CD8-positive, alpha-beta T cell (primary cell): ENCODE measurements at regions of chr7 and their contacts with region 1.

Region 1: DNA sequence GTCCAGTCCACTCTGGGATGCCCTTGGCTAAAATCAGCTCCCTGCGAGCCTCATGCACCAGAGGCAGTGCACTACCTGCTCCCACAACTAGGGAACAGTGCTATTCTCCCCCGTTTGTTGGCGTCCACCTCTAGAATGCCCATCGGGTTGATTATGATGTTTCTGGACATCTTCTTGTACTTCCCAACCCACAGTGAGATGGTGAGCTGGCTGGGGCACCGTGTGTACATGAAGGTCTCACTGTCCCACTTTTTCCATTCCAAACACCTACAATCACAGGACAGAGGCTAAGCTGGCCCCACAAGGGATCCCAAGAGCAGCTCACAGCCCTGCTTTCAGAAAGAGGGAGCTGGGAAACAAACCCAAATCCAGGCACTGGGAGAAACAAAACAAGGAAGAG is 126.2 kb upstream of the ZNF92 start:
- DNase-seq: no peak
- ATAC-seq: no peak
- H3K4me3 ChIP-seq: no peak overlapping the region
- H3K4me3 Mint-ChIP-seq: no peak overlapping the region
- H3K27ac ChIP-seq: no peak overlapping the region
- H3K27ac Mint-ChIP-seq: no peak overlapping the region
- H3K4me1 ChIP-seq: peaks cover 2% of the 10 kb centered on the region
- H3K4me1 Mint-ChIP-seq: peaks cover 8% of the 10 kb centered on the region
- H3K27me3 ChIP-seq: peaks cover 0 to 4% of the 10 kb centered on the region in 2 experiments
- H3K27me3 Mint-ChIP-seq: peaks cover 26% of the 10 kb centered on the region
- CTCF ChIP-seq: no peak

Region 2: GRCh38 chr7:64849250-64849923 is 398.1 kb before region 1 on chr7:
- CTCF ChIA-PET with region 1: no interaction called
- POLR2A ChIA-PET with region 1: no interaction called
- intact Hi-C with region 1: no loop called
- DNase-seq: no peak
- ATAC-seq: no peak
- H3K4me3 ChIP-seq: no peak overlapping the region
- H3K4me3 Mint-ChIP-seq: no peak overlapping the region
- H3K27ac ChIP-seq: no peak overlapping the region
- H3K27ac Mint-ChIP-seq: no peak overlapping the region
- H3K4me1 ChIP-seq: no peaks in the 10 kb centered on the region
- H3K4me1 Mint-ChIP-seq: no peaks in the 10 kb centered on the region
- H3K27me3 ChIP-seq: no peaks in the 10 kb centered on the region
- H3K27me3 Mint-ChIP-seq: no peaks in the 10 kb centered on the region
- CTCF ChIP-seq: no peak

Region 3: GRCh38 chr7:65269150-65269856 is 21.8 kb after region 1 on chr7:
- CTCF ChIA-PET with region 1: no interaction called
- POLR2A ChIA-PET with region 1: no interaction called
- intact Hi-C with region 1: no loop called
- DNase-seq: peak in 2 of 9 experiments; percentile 13 to 15
- ATAC-seq: no peak
- H3K4me3 ChIP-seq: peak overlapping the region; percentile 22 to 26
- H3K4me3 Mint-ChIP-seq: peak overlapping the region; percentile 76
- H3K27ac ChIP-seq: no peak overlapping the region
- H3K27ac Mint-ChIP-seq: no peak overlapping the region
- H3K4me1 ChIP-seq: peaks cover 10% of the 10 kb centered on the region
- H3K4me1 Mint-ChIP-seq: peaks cover 14% of the 10 kb centered on the region
- H3K27me3 ChIP-seq: peaks cover 4 to 8% of the 10 kb centered on the region in 2 experiments
- H3K27me3 Mint-ChIP-seq: peaks cover 50% of the 10 kb centered on the region
- CTCF ChIP-seq: no peak

Region 4: DNA sequence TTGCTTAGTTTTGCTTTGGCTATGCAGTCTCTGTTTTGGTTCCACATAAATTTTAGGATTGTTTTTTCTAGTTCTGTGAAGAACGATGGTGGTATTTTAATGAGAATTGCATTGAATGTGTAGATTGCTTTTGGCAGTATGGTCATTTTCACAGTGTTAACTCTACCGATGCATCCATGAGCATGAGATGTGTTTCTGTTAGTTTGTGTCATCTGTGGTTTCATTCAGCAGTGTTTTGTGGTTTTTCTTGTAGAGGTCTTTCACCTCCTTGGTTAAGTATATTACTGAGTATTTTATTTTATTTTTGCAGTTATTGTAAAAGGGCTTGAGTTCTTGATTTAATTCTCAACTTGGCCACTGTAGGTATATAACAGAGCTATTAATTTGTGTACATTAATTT is 47.9 kb after region 1 on chr7:
- CTCF ChIA-PET with region 1: no interaction called
- POLR2A ChIA-PET with region 1: no interaction called
- intact Hi-C with region 1: loop called in 1 of 2 experiments (anchors 1 kb)
- DNase-seq: no peak
- ATAC-seq: no peak
- H3K4me3 ChIP-seq: no peak overlapping the region
- H3K4me3 Mint-ChIP-seq: no peak overlapping the region
- H3K27ac ChIP-seq: no peak overlapping the region
- H3K27ac Mint-ChIP-seq: no peak overlapping the region
- H3K4me1 ChIP-seq: no peaks in the 10 kb centered on the region
- H3K4me1 Mint-ChIP-seq: no peaks in the 10 kb centered on the region
- H3K27me3 ChIP-seq: no peaks in the 10 kb centered on the region
- H3K27me3 Mint-ChIP-seq: no peaks in the 10 kb centered on the region
- CTCF ChIP-seq: no peak

Region 5: GRCh38 chr7:65449505-65449852 is 202.0 kb after region 1 on chr7:
- CTCF ChIA-PET with region 1: no interaction called
- POLR2A ChIA-PET with region 1: no interaction called
- intact Hi-C with region 1: no loop called
- DNase-seq: no peak
- ATAC-seq: no peak
- H3K4me3 ChIP-seq: no peak overlapping the region
- H3K4me3 Mint-ChIP-seq: no peak overlapping the region
- H3K27ac ChIP-seq: no peak overlapping the region
- H3K27ac Mint-ChIP-seq: no peak overlapping the region
- H3K4me1 ChIP-seq: no peaks in the 10 kb centered on the region
- H3K4me1 Mint-ChIP-seq: peaks cover 27% of the 10 kb centered on the region
- H3K27me3 ChIP-seq: no peaks in the 10 kb centered on the region
- H3K27me3 Mint-ChIP-seq: peaks cover 6% of the 10 kb centered on the region
- CTCF ChIP-seq: no peak